Sigmoid colon (tissue), 7 donors: ENCODE measurements at regions of chr19 and their contacts with region 1.

Region 1: GRCh38 chr19:7355151-7355820 is 6.5 kb downstream of the ARHGEF18 start:
- DNase-seq: peak; percentile 92
- H3K4me3 ChIP-seq: peak overlapping the region; percentile 48 to 64 (median 55)
- H3K27ac ChIP-seq: peak overlapping the region; percentile 27 to 94 (median 88)
- H3K4me1 ChIP-seq: peaks cover 0 to 38% (median 17%) of the 10 kb centered on the region in 4 donors
- H3K27me3 ChIP-seq: no peaks in the 10 kb centered on the region
- CTCF ChIP-seq: no peak
- EP300 ChIP-seq: peak in 2 of 4 donors; percentile 8 to 23
- POLR2A ChIP-seq: peak; percentile 56 to 75

Region 2: GRCh38 chr19:7159105-7159933 is 196.0 kb before region 1 on chr19:
- intact Hi-C with region 1: loop called (anchors 5 kb)
- DNase-seq: peak; percentile 96
- H3K4me3 ChIP-seq: no peak overlapping the region
- H3K27ac ChIP-seq: peak overlapping the region; percentile 76 to 89 (median 82)
- H3K4me1 ChIP-seq: peaks cover 0 to 28% (median 16%) of the 10 kb centered on the region in 4 donors
- H3K27me3 ChIP-seq: no peaks in the 10 kb centered on the region
- CTCF ChIP-seq: no peak
- EP300 ChIP-seq: peak in 3 of 4 donors; percentile 3 to 94 (median 56)
- POLR2A ChIP-seq: no peak

Region 3: GRCh38 chr19:7368456-7368855 is 13.2 kb after region 1 on chr19:
- intact Hi-C with region 1: loop called (anchors 1 kb)
- DNase-seq: peak; percentile 99
- H3K4me3 ChIP-seq: peak overlapping the region in 1 of 4 donors; percentile 10
- H3K27ac ChIP-seq: peak overlapping the region; percentile 76 to 94 (median 92)
- H3K4me1 ChIP-seq: peaks cover 0 to 83% (median 67%) of the 10 kb centered on the region in 4 donors
- H3K27me3 ChIP-seq: no peaks in the 10 kb centered on the region
- CTCF ChIP-seq: no peak
- EP300 ChIP-seq: peak; percentile 95 to 99 (median 98)
- POLR2A ChIP-seq: no peak

Region 4: DNA sequence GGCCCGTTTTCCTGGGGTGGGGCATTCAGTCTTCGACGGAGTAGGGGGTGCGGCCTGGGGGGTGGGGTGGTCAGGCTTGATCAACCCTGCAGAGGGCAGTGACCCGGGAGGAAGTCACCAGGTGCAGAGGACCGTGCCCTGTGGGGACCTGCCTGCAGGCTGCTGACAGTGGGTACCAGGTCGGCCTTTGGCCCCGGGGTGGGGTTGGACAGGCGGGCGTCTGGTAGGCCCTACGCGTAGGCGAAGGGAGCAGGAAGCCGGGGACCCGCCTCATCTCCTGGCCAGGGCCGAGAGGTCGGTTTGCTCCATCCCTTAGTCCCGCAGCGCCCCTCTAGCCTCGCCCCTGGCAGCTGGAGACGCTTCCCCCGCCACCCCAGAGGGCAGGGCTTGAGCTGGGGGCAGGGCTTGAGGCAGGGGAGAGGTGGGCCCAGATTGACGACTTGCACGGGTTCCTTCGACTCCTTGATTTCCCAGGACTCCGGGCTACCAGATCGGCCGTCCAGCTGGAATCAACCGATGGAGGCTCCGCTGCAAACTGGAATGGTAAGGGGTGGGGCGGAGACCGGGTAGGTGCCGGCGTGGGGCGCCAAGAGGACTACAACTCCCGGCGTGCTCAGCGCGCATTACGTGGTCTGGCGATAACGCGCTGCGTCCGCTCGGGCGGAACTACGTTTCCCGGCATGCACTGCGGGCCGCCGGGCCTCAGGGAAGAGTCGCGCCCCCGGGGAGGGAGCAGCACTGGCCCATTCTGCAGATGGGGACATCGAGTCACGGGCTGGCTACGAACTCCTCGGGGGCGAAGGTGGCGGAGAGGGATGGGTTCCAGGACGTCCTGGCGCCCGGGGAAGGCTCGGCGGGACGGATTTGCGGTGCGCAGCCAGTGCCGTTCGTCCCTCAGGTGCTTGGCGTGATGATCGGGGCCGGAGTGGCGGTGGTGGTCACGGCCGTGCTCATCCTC is 180.0 kb after region 1 on chr19 and contains the start of gene PNPLA6:
- intact Hi-C with region 1: loop called (anchors 5 kb)
- DNase-seq: peak; percentile 98
- H3K4me3 ChIP-seq: peak within 1 kb of the TSS; percentile 72 to 89 (median 84)
- H3K27ac ChIP-seq: peak within 1 kb of the TSS; percentile 87 to 97 (median 96)
- H3K4me1 ChIP-seq: peaks cover 0 to 27% (median 16%) of the 10 kb centered on the region in 4 donors
- H3K27me3 ChIP-seq: no peaks in the 10 kb centered on the region
- CTCF ChIP-seq: no peak
- EP300 ChIP-seq: no peak
- POLR2A ChIP-seq: peak; percentile 46 to 69
- total RNA-seq, gene PNPLA6: 35.2 to 77.0 (median 44.1) TPM